ENCODE measurements at regions of chr9 and their contacts with region 1.

Region 1: GRCh38 chr9:14768405-14769229 is 46.1 kb upstream of the CER1 start:
- DNase-seq: no peak
- ATAC-seq: peak; percentile 23 to 44

Region 2: GRCh38 chr9:13033959-13034693 is 1734.5 kb before region 1 on chr9:
- intact Hi-C with region 1: loop called in 1 of 2 experiments (anchors 10 kb)
- DNase-seq: peak; percentile 72
- ATAC-seq: peak; percentile 92 to 93

Region 3: GRCh38 chr9:14466429-14466818 is 302.2 kb before region 1 on chr9:
- intact Hi-C with region 1: loop called in 1 of 2 experiments (anchors 5 kb)
- DNase-seq: no peak
- ATAC-seq: no peak

Region 4: DNA sequence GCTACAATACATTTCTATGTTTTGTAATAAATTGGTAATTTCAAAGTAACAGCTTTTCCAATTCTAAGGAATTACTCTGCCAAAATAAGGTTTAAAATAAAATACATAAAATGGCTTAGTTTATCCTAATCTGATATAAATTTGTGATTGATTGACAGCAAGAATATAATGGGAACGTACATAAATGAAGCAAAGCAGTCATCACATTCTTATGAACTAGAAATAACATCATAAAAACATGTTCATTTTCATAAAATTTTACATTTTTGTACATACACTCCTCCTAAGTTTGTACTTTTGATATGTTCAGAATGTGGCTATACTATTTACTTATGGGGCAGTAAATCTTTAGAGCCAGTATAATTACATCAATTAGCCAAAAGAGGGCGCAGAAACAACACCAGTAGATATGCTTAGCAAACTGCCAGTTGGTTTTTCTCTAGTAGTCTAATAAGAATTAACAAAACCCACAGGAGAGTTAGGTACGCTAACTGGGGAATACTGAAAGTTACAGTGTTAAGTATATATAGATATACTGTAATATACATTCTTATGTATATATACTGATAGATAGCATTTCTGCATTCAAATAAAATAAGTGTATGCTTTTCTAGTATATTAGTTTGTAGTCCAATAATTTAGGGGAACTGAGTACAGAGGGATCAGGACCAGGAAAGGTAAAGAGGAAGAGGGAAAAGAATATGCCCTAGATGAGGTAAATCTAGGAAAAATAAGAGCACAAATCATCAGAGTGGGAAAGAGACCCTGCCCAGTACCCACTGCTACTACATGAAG is 152.2 kb before region 1 on chr9:
- intact Hi-C with region 1: loop called in 1 of 2 experiments (anchors 5 kb)
- DNase-seq: no peak
- ATAC-seq: no peak

Region 5: GRCh38 chr9:14670718-14671117 is 97.9 kb before region 1 on chr9:
- intact Hi-C with region 1: no loop called
- DNase-seq: no peak
- ATAC-seq: no peak

Region 6: GRCh38 chr9:14846871-14847311 is 78.3 kb after region 1 on chr9:
- intact Hi-C with region 1: no loop called
- DNase-seq: peak; percentile 50
- ATAC-seq: peak; percentile 30 to 47

Measured in left cardiac atrium (tissue), 4 donors.